Activated naive CD4-positive, alpha-beta T cell treated with anti-CD3 and anti-CD28 coated beads for 36 hours (primary cell): ENCODE measurements at regions of chr1 and their contacts with region 1.

Region 1: DNA sequence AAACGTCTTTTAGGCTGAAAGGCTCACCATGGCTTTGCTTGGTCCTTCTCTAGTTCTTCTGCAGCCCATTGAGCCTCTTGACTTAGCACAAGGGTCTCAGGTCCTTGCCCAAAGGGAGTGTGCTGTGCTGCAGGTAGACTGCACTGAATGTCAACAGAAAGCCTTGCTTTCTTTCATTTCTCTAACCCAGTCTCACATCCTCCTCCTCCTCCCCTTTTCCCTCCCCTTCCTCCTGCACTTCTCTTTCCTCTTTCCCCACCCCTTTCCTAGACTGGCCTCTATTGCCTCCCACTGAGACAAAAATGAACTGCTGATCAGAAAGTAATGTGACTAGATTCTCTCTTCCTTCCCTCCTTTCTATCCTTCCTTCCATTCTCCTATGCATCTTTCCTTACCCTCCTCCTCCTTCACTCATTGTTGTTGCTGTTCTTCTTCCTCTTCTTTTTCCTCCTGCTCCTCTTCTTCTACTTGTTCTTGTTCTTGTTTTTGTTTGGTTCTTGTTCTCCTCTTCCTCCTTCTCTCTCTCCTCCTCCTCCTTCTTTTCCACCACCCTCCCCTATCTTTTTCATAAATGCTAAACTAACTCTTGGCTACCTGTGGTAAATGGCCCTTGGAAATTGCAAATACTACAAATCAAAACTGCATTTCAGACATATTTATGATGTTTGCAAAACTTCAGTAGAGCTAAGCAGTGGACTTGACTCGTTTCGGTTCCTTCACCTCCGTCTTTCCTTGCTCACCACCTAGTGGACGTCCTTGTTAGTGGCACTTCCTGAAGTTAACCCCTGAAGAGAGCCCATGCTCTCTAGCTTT is at the start of gene SELL:
- DNase-seq: peak; percentile 91
- H3K4me3 Mint-ChIP-seq: peak within 1 kb of the TSS; percentile 80
- H3K27ac Mint-ChIP-seq: peak within 1 kb of the TSS; percentile 94
- H3K4me1 Mint-ChIP-seq: peaks cover 12% of the 10 kb centered on the region
- H3K27me3 Mint-ChIP-seq: peaks cover 5% of the 10 kb centered on the region
- total RNA-seq, gene SELL: 362 to 365 TPM

Region 2: GRCh38 chr1:169466259-169467230 is 245.1 kb before region 1 on chr1:
- CTCF ChIA-PET with region 1: no interaction called
- intact Hi-C with region 1: loop called (anchors 1 kb)
- DNase-seq: peak; percentile 57
- H3K4me3 Mint-ChIP-seq: no peak overlapping the region
- H3K27ac Mint-ChIP-seq: no peak overlapping the region
- H3K4me1 Mint-ChIP-seq: peaks cover 4% of the 10 kb centered on the region
- H3K27me3 Mint-ChIP-seq: no peaks in the 10 kb centered on the region

Region 3: DNA sequence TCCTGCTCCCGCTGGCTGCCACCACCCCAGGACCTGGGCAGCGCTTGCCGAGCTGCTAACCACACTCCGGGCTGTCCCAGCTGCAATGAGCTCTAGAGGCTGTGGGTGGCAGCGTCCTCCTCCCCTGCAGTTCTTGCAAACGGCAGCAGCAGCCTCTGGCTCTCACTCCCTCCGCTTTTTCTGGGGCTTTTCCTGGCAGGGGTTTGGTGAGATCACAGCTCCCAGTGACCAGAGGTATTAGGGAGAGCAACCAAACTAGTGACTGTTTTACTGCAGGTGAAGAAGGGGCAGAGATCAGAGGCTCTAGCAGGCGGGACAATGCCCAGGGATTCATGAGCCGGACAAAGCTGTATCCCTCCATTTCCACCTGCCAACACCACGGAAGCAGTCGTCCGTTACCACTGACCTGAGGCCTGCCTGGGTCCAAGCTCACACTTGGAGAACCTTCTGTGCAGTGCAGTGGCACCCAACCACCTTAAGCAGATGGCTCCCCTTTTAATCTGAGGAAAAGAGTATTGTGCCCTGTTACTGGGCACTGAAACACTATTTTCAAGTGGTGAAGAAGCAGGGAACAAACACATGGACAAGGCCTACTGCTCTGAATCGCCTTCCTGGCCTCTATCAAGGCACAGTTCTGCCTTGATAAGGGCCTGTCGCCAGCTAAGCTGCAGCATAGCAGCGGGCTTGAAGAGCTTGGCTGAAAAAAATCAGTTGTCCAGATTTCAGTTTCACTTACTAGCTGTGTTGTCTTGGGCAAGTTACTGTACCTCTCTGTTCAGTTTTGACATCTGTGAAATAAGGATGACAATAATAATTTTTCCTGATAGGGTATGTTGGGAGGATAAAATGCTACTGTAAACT is 125.0 kb before region 1 on chr1 and contains the start of gene F5:
- CTCF ChIA-PET with region 1: interaction called, 46 read pairs
- intact Hi-C with region 1: loop called (anchors 1 kb)
- DNase-seq: peak; percentile 94
- H3K4me3 Mint-ChIP-seq: peak within 1 kb of the TSS; percentile 94
- H3K27ac Mint-ChIP-seq: peak within 1 kb of the TSS; percentile 97
- H3K4me1 Mint-ChIP-seq: peaks cover 60% of the 10 kb centered on the region
- H3K27me3 Mint-ChIP-seq: no peaks in the 10 kb centered on the region
- total RNA-seq, gene F5: 58.6 to 59.1 TPM

Region 4: GRCh38 chr1:169624122-169624521 is 87.6 kb before region 1 on chr1:
- CTCF ChIA-PET with region 1: interaction called, 8 read pairs
- intact Hi-C with region 1: loop called (anchors 1 kb)
- DNase-seq: no peak
- H3K4me3 Mint-ChIP-seq: no peak overlapping the region
- H3K27ac Mint-ChIP-seq: peak overlapping the region; percentile 89
- H3K4me1 Mint-ChIP-seq: peaks cover 69% of the 10 kb centered on the region
- H3K27me3 Mint-ChIP-seq: no peaks in the 10 kb centered on the region

Region 5: GRCh38 chr1:169680377-169681019 is 31.2 kb before region 1 on chr1:
- CTCF ChIA-PET with region 1: interaction called, 12 read pairs
- intact Hi-C with region 1: loop called (anchors 1 kb)
- DNase-seq: peak; percentile 83
- H3K4me3 Mint-ChIP-seq: peak overlapping the region; percentile 53
- H3K27ac Mint-ChIP-seq: peak overlapping the region; percentile 90
- H3K4me1 Mint-ChIP-seq: peaks cover 61% of the 10 kb centered on the region
- H3K27me3 Mint-ChIP-seq: no peaks in the 10 kb centered on the region

Region 6: DNA sequence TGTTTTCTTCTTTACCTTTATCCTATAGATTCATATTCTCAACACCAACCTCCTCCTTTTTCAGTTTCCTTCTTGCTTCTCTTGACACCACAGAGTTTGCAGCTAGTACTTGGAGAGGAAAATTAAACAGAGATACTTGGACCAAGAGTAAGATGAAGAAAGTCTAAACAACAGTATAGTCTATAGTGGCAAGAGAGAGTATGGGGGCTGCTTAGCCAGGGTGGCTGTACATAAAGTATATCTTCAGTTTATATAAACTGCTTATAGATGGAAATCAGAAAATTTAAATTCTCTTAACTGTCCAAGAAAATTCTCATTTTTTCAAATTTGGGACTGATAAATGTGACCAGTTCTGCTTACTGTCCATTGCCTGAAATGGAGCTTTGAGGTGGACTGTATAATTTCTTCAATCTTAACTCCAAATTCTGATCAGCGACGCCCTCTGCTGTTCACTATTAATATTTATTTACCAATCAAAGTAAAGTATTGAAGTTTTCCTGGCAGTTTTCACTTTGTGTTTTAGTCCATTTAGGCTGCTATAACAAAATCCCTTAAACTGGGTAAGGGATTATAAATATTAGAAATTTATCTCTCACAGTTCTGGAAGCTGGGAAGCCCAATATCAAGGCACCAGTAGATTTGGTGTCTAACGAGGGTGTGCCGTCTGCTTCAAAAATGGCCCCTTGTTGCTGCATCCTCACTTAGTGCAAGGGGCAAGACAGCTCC is 97.9 kb after region 1 on chr1:
- CTCF ChIA-PET with region 1: interaction called, 7 read pairs
- intact Hi-C with region 1: loop called (anchors 1 kb)
- DNase-seq: peak; percentile 10
- H3K4me3 Mint-ChIP-seq: no peak overlapping the region
- H3K27ac Mint-ChIP-seq: no peak overlapping the region
- H3K4me1 Mint-ChIP-seq: no peaks in the 10 kb centered on the region
- H3K27me3 Mint-ChIP-seq: no peaks in the 10 kb centered on the region

Region 7: DNA sequence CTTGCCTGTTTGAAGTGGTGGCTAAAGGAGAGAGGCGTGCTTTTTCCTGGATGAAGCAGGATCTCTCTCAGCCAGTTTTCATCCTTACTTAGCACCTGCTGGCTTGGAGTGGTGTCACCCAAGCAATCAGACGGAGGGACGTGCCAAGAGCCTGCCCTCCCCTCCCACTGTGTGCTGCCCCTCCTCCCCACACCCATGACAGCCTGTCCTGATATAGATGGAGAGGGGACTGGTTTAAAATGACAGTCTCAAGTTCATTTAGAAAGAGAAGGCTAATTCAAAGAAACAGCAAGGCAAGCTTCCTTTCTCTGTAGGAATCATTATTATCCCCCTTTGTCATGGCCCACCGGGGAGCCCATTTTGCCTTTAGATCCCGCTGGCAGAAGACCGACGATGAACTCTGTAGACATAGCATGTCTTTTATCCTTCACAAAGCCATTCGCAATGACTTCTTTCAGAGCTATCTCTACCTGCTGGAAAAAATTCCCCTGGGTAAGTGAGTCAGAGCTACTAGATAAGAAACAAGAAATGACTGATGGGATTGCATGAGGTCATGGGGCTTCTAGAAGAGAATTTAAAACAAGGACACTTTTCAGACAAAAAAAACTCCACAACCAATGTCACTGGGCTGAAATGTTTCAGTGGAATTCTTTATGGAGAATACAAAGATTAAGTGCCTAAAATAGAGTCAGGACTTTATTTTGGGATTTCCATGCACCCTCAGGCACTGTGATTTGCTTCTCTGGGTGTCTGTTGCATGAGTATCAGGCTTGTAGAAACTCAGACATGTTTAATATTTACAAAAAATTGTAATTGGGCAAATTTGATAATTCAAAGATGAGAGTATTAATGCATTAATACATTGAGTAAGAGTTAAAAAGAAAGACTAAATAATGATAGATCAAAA is 434.3 kb after region 1 on chr1 and contains the start of gene NTMT2:
- CTCF ChIA-PET with region 1: no interaction called
- intact Hi-C with region 1: no loop called
- DNase-seq: peak; percentile 9
- H3K4me3 Mint-ChIP-seq: no peak within 1 kb of the TSS
- H3K27ac Mint-ChIP-seq: no peak within 1 kb of the TSS
- H3K4me1 Mint-ChIP-seq: peaks cover 19% of the 10 kb centered on the region
- H3K27me3 Mint-ChIP-seq: peaks cover 3% of the 10 kb centered on the region
- total RNA-seq, gene NTMT2: not detected